Esophagus muscularis mucosa (tissue), 4 donors: ENCODE measurements at regions of chr20 and their contacts with region 1.

Region 1: DNA sequence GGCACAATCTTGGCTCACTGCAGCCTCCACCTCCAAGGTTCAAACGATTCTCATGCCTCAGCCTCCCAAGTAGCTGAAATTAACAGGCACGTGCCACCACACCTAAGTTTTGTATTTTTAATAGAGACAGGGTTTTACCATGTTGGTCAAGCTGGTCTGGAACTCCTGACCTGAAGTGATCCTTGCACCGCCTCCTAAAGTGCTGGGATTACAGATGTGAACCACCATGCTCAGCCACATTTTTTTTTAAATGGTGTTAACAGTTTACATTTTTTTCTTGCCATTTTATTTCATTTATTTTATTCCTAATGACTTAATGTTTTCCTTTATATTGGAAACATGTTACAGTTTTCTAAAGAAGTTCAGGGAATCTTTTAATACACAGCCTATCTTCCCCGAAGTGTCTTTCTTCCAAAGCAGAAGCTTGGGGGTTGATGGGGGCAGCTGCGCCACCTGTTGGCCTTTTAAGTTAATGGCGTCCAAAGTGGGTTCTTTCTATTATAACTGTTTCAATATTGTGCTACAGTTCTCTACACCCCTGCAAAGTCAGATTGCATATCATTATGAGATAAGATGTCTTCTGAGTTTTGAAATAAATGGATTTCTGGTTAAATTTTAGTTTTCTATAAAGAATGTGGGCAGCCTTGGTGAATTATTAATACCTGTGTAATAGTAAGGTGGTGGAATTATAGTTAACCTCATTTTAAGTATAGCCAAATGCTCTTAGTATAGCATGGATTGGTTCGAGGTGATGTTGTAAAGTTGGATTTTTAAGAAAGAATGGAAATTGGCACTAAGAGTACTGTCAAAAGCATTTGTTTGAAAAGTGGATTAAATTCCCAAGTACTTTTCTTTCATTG is 42.0 kb upstream of the PLCG1 start:
- DNase-seq: no peak
- H3K4me3 ChIP-seq: no peak overlapping the region
- H3K27ac ChIP-seq: peak overlapping the region in 1 of 4 donors; percentile 48
- H3K4me1 ChIP-seq: peaks cover 0 to 22% (median 11%) of the 10 kb centered on the region in 4 donors
- H3K27me3 ChIP-seq: no peaks in the 10 kb centered on the region
- CTCF ChIP-seq: peak; percentile 83 to 86 (median 83)
- EP300 ChIP-seq: no peak
- POLR2A ChIP-seq: no peak

Region 2: DNA sequence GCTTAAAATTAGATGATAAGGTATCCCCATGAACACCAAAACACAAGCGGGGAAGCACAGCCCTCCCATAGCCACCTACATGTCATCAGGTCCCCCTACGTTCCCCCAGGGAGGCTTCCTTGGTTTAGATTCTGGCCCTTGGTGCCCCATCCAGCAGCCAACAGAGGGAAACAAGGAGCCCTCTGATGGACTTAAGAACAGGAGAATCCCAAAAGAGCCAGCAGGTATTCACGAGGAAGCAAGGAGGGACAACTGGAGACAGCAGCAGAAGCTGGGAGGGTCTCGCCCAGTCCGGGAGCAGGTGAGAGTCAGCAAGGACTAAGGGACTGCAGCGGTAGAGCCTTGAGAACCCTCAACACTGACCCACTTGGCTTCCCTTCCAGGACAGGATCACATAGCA is 125.1 kb before region 1 on chr20:
- intact Hi-C with region 1: loop called (anchors 2 kb)
- DNase-seq: peak; percentile 89
- H3K4me3 ChIP-seq: no peak overlapping the region
- H3K27ac ChIP-seq: no peak overlapping the region
- H3K4me1 ChIP-seq: peaks cover 0 to 11% (median 8%) of the 10 kb centered on the region in 4 donors
- H3K27me3 ChIP-seq: no peaks in the 10 kb centered on the region
- CTCF ChIP-seq: no peak
- EP300 ChIP-seq: no peak
- POLR2A ChIP-seq: no peak

Region 3: DNA sequence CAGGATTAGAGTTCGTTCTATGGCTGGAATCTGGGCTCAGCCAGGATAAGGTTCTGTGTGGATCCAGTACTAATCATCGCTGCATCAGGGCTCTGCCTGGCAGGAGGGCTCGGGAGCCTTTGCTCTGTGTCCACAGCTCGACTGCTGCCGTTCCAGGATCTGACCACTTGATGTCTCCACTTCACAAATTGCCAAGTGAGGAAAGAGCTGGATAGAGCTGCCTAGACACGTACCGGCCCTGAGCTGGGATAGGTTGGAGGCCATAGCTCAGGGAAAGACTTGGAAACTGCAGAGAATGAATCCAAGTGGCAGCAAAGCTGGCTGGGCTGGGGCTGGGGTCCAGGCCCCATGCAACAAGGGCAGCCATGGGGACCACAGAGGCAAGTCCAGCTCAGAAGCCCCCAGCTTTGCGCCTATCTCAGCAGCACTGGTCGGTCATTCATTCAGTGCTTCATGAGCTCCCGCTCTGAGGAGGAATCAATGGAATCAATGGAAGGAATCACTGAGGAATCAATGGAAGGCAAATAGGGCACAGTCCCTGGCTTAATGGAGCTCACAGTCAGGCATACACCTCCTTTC is 104.7 kb before region 1 on chr20:
- intact Hi-C with region 1: loop called (anchors 2 kb)
- DNase-seq: peak; percentile 93
- H3K4me3 ChIP-seq: no peak overlapping the region
- H3K27ac ChIP-seq: no peak overlapping the region
- H3K4me1 ChIP-seq: peaks cover 4 to 11% (median 7%) of the 10 kb centered on the region in 4 donors
- H3K27me3 ChIP-seq: no peaks in the 10 kb centered on the region
- CTCF ChIP-seq: peak; percentile 75 to 86 (median 85)
- EP300 ChIP-seq: no peak
- POLR2A ChIP-seq: no peak

Region 4: DNA sequence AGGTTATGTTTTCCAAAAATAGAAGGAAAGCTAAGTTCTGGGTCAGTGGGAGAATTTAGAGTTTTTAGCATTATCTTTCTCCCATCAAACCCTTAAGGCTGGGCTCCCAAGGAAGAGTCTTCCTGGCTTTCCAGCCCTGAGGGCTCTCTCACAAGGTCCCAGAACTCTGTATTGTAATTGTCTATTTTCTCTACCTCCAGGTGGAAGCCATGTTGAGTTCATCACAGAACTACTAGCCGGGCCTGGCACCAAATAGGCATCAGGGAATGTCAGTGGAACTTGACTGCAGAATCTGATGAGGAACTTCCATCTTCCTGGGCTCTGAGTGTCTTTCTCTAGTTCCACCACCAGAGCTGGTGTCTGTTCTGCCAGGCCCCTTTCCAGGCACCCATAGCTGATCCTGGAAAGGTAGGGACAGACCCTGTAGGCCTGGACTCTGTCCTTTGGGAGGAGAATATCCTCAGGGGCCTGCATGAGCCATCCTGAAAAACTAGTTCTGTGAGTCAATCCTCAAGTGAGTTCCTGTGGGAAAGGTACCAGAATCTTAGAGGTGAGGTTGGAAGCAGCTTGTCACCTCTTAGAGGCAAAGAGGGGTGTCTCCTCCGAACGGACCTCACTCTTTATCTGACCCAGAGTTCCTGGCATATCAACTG is 77.8 kb before region 1 on chr20:
- intact Hi-C with region 1: no loop called
- DNase-seq: no peak
- H3K4me3 ChIP-seq: no peak overlapping the region
- H3K27ac ChIP-seq: no peak overlapping the region
- H3K4me1 ChIP-seq: peaks cover 0 to 7% (median 5%) of the 10 kb centered on the region in 4 donors
- H3K27me3 ChIP-seq: no peaks in the 10 kb centered on the region
- CTCF ChIP-seq: no peak
- EP300 ChIP-seq: no peak
- POLR2A ChIP-seq: no peak

Region 5: GRCh38 chr20:41136680-41137613 is 41.6 kb after region 1 on chr20 and contains the start of gene PLCG1:
- intact Hi-C with region 1: no loop called
- DNase-seq: peak; percentile 95
- H3K4me3 ChIP-seq: peak within 1 kb of the TSS; percentile 79 to 93 (median 90)
- H3K27ac ChIP-seq: peak within 1 kb of the TSS; percentile 95 to 97 (median 96)
- H3K4me1 ChIP-seq: peaks cover 35 to 61% (median 57%) of the 10 kb centered on the region in 4 donors
- H3K27me3 ChIP-seq: no peaks in the 10 kb centered on the region
- CTCF ChIP-seq: no peak
- EP300 ChIP-seq: no peak
- POLR2A ChIP-seq: peak; percentile 61
- total RNA-seq, gene PLCG1: 68.4 to 119 (median 82.5) TPM